HAP-1 (cell line): ENCODE measurements at regions of chr1 and their contacts with region 1.

Region 1: DNA sequence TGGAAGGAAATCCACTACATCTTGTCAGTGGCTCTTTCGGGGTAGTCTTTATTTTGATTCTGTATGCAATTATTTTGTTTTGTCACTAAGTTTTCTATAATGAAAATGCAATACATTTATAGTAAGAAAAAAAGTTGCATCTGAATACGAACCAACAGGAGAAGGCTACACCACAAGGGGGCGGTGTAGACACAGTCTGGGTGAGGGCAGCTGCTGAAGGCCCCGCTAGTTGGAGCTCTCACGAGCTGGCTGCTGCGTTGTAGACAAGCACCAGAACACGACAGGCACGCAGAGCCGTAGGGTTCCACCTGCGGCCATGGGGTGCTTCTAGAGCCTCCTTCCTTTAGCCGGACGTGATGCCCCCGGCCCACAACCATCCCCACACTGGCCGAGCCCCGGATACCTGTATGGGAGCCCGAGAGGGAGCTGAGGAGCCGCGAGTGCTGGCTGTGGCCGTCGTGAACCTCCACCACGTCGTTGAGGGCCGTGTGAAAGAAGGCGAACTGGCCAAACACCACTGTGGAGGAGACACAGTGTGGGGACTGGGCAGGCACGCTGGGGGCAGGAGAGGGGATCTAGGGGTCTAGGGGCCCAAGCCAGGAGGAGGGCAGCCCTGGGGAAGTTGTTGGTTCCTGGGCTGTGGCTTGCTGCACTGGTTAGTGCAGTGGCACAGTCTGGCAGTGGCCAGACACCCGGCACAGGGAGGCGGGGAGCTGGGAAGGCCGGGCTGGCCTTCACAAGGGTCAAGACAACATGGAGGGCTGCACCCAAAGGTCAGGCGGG is 160.8 kb downstream of the ZSCAN20 start:
- DNase-seq: peak; percentile 85 to 94
- H3K4me3 ChIP-seq: no peak overlapping the region
- H3K4me1 ChIP-seq: no peaks in the 10 kb centered on the region
- H3K27me3 ChIP-seq: peaks cover 7% of the 10 kb centered on the region; the same call in 1 of the 2 replicates

Region 2: GRCh38 chr1:34597877-34598514 is 964.8 kb after region 1 on chr1:
- in situ Hi-C with region 1: loop called (anchors 25 kb)
- DNase-seq: peak; percentile 17 to 86
- H3K4me3 ChIP-seq: no peak overlapping the region
- H3K4me1 ChIP-seq: no peaks in the 10 kb centered on the region
- H3K27me3 ChIP-seq: no peaks in the 10 kb centered on the region

Region 3: GRCh38 chr1:34742667-34743270 is 1109.6 kb after region 1 on chr1:
- in situ Hi-C with region 1: loop called (anchors 10 kb)
- DNase-seq: peak; percentile 61 to 87
- H3K4me3 ChIP-seq: no peak overlapping the region
- H3K4me1 ChIP-seq: no peaks in the 10 kb centered on the region
- H3K27me3 ChIP-seq: peaks cover 5% of the 10 kb centered on the region; the same call in 1 of the 2 replicates